B cell (primary cell): ENCODE measurements at regions of chr3 and their contacts with region 1.

Region 1: DNA sequence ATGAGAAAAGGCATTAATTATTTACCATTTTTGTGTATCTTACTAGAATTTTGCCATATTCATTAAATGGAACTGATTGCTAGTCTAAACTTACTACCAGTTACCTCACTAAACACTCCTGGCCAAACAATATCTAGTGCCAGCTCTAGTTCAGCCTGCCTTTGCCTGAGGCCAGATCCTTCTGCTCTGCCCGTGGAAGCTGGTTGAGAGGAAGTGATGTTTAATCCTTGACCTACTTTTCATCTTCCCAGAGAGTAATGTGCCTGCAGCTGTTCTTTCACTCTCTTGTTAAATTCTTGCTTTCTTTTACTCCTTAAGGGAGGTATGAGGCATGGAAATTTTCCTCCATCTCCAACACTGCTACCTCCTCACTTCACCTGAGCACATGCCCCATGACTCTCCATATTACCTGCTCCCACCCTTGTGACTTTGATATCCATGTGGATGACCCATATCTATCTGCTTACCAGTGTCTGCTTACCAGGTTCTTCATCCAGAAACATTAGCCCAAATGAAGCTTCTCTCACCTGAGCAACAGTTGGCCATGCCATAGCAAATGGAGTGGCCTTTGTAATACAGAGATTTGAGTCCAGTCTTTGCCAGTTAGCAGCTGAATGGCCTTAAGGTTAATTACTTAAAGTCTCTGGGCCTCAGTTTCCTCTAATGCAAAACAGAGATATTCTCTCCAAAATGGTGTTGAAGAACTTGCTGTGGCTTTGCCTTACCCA is 53.4 kb downstream of the UBE2E1 start:
- DNase-seq: no peak
- ATAC-seq: no peak
- H3K4me3 ChIP-seq: no peak overlapping the region
- H3K4me3 Mint-ChIP-seq: no peak overlapping the region
- H3K27ac ChIP-seq: no peak overlapping the region
- H3K27ac Mint-ChIP-seq: peak overlapping the region; percentile 27
- H3K4me1 ChIP-seq: peaks cover 36 to 40% of the 10 kb centered on the region in 2 donors
- H3K4me1 Mint-ChIP-seq: peaks cover 54% of the 10 kb centered on the region
- H3K27me3 ChIP-seq: no peaks in the 10 kb centered on the region
- H3K27me3 Mint-ChIP-seq: no peaks in the 10 kb centered on the region
- CTCF ChIP-seq: no peak

Region 2: GRCh38 chr3:23202921-23203707 is 656.1 kb before region 1 on chr3 and contains the start of gene UBE2E2:
- CTCF ChIA-PET with region 1: no interaction called
- POLR2A ChIA-PET with region 1: no interaction called
- intact Hi-C with region 1: loop called (anchors 1 kb)
- DNase-seq: peak; percentile 90
- ATAC-seq: peak; percentile 77
- H3K4me3 ChIP-seq: peak within 1 kb of the TSS; percentile 62 to 97 (median 90)
- H3K4me3 Mint-ChIP-seq: peak within 1 kb of the TSS; percentile 97
- H3K27ac ChIP-seq: peak within 1 kb of the TSS; percentile 66 to 78
- H3K27ac Mint-ChIP-seq: peak within 1 kb of the TSS; percentile 86
- H3K4me1 ChIP-seq: peaks cover 13% of the 10 kb centered on the region in 2 donors
- H3K4me1 Mint-ChIP-seq: peaks cover 35% of the 10 kb centered on the region
- H3K27me3 ChIP-seq: no peaks in the 10 kb centered on the region
- H3K27me3 Mint-ChIP-seq: no peaks in the 10 kb centered on the region
- CTCF ChIP-seq: no peak
- total RNA-seq, gene UBE2E2: 44.2 and 45.0 TPM in 2 replicates

Region 3: GRCh38 chr3:23761440-23761896 is 97.7 kb before region 1 on chr3:
- CTCF ChIA-PET with region 1: no interaction called
- POLR2A ChIA-PET with region 1: no interaction called
- intact Hi-C with region 1: loop called (anchors 5 kb)
- DNase-seq: peak; percentile 37
- ATAC-seq: no peak
- H3K4me3 ChIP-seq: no peak overlapping the region
- H3K4me3 Mint-ChIP-seq: no peak overlapping the region
- H3K27ac ChIP-seq: no peak overlapping the region
- H3K27ac Mint-ChIP-seq: peak overlapping the region; percentile 53
- H3K4me1 ChIP-seq: peaks cover 31 to 33% of the 10 kb centered on the region in 2 donors
- H3K4me1 Mint-ChIP-seq: peaks cover 33% of the 10 kb centered on the region
- H3K27me3 ChIP-seq: no peaks in the 10 kb centered on the region
- H3K27me3 Mint-ChIP-seq: no peaks in the 10 kb centered on the region
- CTCF ChIP-seq: no peak

Region 4: GRCh38 chr3:23834082-23834870 is 24.9 kb before region 1 on chr3:
- CTCF ChIA-PET with region 1: interaction called, 7 read pairs
- POLR2A ChIA-PET with region 1: interaction called, 3 read pairs
- intact Hi-C with region 1: loop called (anchors 2 kb)
- DNase-seq: no peak
- ATAC-seq: no peak
- H3K4me3 ChIP-seq: no peak overlapping the region
- H3K4me3 Mint-ChIP-seq: no peak overlapping the region
- H3K27ac ChIP-seq: no peak overlapping the region
- H3K27ac Mint-ChIP-seq: no peak overlapping the region
- H3K4me1 ChIP-seq: peaks cover 55 to 64% of the 10 kb centered on the region in 2 donors
- H3K4me1 Mint-ChIP-seq: peaks cover 69% of the 10 kb centered on the region
- H3K27me3 ChIP-seq: no peaks in the 10 kb centered on the region
- H3K27me3 Mint-ChIP-seq: no peaks in the 10 kb centered on the region
- CTCF ChIP-seq: peak; percentile 28

Region 5: DNA sequence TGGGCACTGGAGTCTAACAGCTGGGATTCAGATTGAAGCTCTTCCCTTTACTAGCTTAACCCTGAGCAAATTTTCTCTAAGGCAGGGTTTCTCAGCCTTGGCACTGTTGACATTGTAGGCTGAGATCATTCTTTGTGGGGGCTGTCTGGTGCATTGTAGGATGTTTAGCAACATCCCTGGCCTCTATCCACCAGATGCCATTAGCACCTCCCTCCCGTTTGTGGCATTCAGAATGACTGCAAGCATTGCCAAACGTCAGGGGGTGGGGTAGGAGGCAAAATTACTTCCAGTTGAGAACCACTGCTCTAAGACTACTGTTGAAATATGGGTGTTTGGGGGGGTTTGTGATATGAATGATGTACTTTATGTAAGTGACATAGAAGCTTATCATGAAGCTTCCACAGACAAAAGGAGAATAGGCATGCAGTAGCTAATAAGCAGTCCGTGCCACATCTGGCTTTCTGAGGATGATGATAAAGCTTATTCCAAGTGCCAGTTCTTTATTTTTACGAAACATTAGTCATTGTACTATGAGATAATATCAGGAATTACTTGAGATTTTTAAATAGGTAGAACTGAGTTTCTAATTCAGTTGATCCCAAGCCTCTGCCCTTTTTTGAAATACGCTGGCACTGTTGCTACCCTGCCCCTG is 18.3 kb after region 1 on chr3:
- CTCF ChIA-PET with region 1: no interaction called
- POLR2A ChIA-PET with region 1: no interaction called
- intact Hi-C with region 1: no loop called
- DNase-seq: no peak
- ATAC-seq: no peak
- H3K4me3 ChIP-seq: no peak overlapping the region
- H3K4me3 Mint-ChIP-seq: no peak overlapping the region
- H3K27ac ChIP-seq: no peak overlapping the region
- H3K27ac Mint-ChIP-seq: no peak overlapping the region
- H3K4me1 ChIP-seq: peaks cover 0 to 13% of the 10 kb centered on the region in 2 donors
- H3K4me1 Mint-ChIP-seq: peaks cover 56% of the 10 kb centered on the region
- H3K27me3 ChIP-seq: no peaks in the 10 kb centered on the region
- H3K27me3 Mint-ChIP-seq: no peaks in the 10 kb centered on the region
- CTCF ChIP-seq: no peak

Region 6: DNA sequence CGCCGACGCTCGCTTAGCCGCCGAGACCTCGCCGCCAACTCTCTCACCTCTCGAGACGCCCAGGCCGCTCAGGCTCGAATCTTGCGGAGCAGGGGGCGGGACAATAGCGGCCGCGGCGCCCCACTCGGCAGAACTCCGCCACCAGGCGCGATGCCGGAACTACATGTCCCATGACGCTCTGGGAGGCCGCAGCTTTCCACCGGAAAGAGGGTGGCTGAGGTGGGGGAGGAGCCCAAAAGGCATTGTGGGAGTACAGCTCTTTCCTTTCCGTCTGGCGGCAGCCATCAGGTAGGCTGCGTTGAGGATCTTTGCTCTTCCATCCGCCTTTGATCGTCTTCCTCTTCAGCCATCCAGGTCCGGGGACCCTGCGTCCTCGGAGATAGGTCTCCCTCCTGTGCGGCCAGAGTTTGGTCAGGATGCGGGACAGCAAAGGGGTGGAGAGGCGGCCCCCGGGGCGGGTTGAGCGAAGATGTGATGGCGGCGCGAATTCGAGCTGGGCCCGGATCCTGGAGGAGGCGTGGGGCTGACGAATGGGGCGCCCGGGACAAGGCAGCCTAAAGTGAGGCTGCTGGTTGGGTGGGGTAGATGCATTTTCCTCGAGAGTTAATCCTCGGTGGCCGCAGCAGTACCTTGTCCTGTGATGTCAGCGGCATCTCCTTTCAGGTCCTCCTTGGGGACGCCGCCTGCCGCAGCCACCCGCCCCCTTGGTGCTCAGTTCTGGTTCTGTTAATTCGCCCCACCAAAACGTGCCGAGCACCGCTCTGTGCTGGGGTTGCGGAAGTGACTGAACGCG is 57.9 kb after region 1 on chr3 and contains the starts of genes NKIRAS1 and RPL15:
- CTCF ChIA-PET with region 1: interaction called, 3 read pairs
- POLR2A ChIA-PET with region 1: interaction called, 3 read pairs
- intact Hi-C with region 1: loop called (anchors 2 kb)
- DNase-seq: peak; percentile 97
- ATAC-seq: peak; percentile 92
- H3K4me3 ChIP-seq: peak within 1 kb of the TSS; percentile 83 to 99 (median 99)
- H3K4me3 Mint-ChIP-seq: peak within 1 kb of the TSS; percentile 99
- H3K27ac ChIP-seq: peak within 1 kb of the TSS; percentile 85 to 94
- H3K27ac Mint-ChIP-seq: peak within 1 kb of the TSS; percentile 99
- H3K4me1 ChIP-seq: peaks cover 33 to 35% of the 10 kb centered on the region in 2 donors
- H3K4me1 Mint-ChIP-seq: peaks cover 51% of the 10 kb centered on the region
- H3K27me3 ChIP-seq: no peaks in the 10 kb centered on the region
- H3K27me3 Mint-ChIP-seq: peaks cover 4% of the 10 kb centered on the region
- CTCF ChIP-seq: peak; percentile 36
- total RNA-seq, gene NKIRAS1: 3.5 and 4.7 TPM in 2 replicates
- total RNA-seq, gene RPL15: 2,162 and 2,177 TPM in 2 replicates

Region 7: DNA sequence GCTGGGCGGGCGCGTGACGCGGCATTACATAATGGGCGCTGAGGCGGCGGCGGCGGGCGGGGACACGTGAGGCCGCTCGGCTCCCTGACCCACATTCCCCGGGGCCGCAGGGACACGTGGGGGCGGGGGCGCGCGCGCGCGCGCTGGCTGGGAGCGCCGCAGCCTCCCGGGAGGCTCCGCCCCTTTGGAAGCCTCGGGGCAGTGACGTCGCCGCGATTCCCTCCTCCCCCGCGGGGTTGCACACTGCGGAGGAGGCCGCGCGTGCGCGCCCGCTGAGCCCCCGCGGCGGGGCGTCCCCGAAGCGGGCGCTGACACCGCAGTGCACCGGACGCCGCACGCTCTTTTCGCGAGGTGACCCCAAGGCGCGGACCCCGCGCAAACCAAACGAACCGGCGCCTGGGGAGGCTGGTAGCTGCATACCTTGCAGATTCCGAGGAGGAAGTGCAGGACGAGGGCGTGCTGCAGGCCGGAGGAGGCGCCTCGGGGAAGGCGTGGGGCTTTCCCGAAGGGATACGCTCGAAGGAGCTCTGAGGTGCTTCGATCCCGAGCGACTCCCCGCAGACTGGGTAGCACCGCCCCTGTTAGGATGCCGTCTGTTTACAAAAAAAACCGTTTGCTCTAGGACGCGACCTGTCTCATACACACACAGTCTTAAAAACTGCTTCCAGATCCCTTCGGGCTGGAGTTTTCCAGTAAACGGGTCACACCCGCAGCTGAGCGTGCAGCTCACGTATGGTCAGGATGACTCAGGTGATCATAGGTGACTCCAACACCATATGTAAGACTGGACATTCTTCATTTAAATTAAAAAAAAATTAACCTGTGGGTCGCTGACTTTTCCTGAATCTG is 86.9 kb after region 1 on chr3:
- CTCF ChIA-PET with region 1: no interaction called
- POLR2A ChIA-PET with region 1: no interaction called
- intact Hi-C with region 1: loop called (anchors 1 kb)
- DNase-seq: peak; percentile 99
- ATAC-seq: peak; percentile 77
- H3K4me3 ChIP-seq: peak overlapping the region; percentile 49 to 88 (median 84)
- H3K4me3 Mint-ChIP-seq: peak overlapping the region; percentile 93
- H3K27ac ChIP-seq: peak overlapping the region; percentile 83
- H3K27ac Mint-ChIP-seq: peak overlapping the region; percentile 92
- H3K4me1 ChIP-seq: peaks cover 30 to 33% of the 10 kb centered on the region in 2 donors
- H3K4me1 Mint-ChIP-seq: peaks cover 48% of the 10 kb centered on the region
- H3K27me3 ChIP-seq: no peaks in the 10 kb centered on the region
- H3K27me3 Mint-ChIP-seq: no peaks in the 10 kb centered on the region
- CTCF ChIP-seq: no peak

Region 8: DNA sequence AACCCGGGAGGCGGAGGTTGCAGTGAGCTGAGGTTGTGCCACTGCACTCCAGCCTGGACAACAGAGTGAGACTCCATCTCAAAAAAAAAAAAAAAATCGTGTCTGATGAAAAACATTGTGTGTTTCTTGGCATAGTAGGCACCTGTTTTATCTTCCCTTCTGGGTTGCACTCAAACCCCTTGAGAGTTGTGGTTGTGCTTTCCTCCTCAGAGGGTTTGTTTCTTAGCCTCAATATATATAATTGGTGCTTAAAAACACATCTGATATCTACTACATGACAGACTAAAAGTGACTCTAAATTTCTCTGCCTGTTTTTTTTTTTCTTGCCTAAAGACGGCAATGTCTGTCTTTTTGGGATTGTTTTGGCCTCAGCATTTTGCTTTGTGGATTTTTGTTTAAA is 93.5 kb after region 1 on chr3:
- CTCF ChIA-PET with region 1: no interaction called
- POLR2A ChIA-PET with region 1: no interaction called
- intact Hi-C with region 1: loop called (anchors 1 kb)
- DNase-seq: peak; percentile 81
- ATAC-seq: peak; percentile 97
- H3K4me3 ChIP-seq: peak overlapping the region in 2 of 5 experiments; percentile 25 to 27
- H3K4me3 Mint-ChIP-seq: peak overlapping the region; percentile 75
- H3K27ac ChIP-seq: peak overlapping the region; percentile 29 to 30
- H3K27ac Mint-ChIP-seq: peak overlapping the region; percentile 88
- H3K4me1 ChIP-seq: peaks cover 47% of the 10 kb centered on the region in 2 donors
- H3K4me1 Mint-ChIP-seq: peaks cover 70% of the 10 kb centered on the region
- H3K27me3 ChIP-seq: no peaks in the 10 kb centered on the region
- H3K27me3 Mint-ChIP-seq: no peaks in the 10 kb centered on the region
- CTCF ChIP-seq: no peak